Breast epithelium (tissue), 4 donors: ENCODE measurements at regions of chr13 and their contacts with region 1.

Region 1: GRCh38 chr13:76474966-76475365 is 411.2 kb downstream of the KCTD12 start:
- DNase-seq: no peak
- H3K4me3 ChIP-seq: no peak overlapping the region
- H3K27ac ChIP-seq: peak overlapping the region in 1 of 2 donors; percentile 16
- H3K4me1 ChIP-seq: no peaks in the 10 kb centered on the region
- H3K27me3 ChIP-seq: no peaks in the 10 kb centered on the region
- CTCF ChIP-seq: no peak
- POLR2A ChIP-seq: no peak

Region 2: GRCh38 chr13:77329133-77329910 is 854.4 kb after region 1 on chr13:
- intact Hi-C with region 1: loop called (anchors 5 kb)
- DNase-seq: peak; percentile 61 to 75
- H3K4me3 ChIP-seq: peak overlapping the region; percentile 80 to 84 (median 81)
- H3K27ac ChIP-seq: peak overlapping the region; percentile 70 to 79
- H3K4me1 ChIP-seq: peaks cover 4 to 8% of the 10 kb centered on the region in 2 donors
- H3K27me3 ChIP-seq: no peaks in the 10 kb centered on the region
- CTCF ChIP-seq: no peak
- POLR2A ChIP-seq: no peak